ENCODE measurements at regions of chr15 and their contacts with region 1.

Region 1: DNA sequence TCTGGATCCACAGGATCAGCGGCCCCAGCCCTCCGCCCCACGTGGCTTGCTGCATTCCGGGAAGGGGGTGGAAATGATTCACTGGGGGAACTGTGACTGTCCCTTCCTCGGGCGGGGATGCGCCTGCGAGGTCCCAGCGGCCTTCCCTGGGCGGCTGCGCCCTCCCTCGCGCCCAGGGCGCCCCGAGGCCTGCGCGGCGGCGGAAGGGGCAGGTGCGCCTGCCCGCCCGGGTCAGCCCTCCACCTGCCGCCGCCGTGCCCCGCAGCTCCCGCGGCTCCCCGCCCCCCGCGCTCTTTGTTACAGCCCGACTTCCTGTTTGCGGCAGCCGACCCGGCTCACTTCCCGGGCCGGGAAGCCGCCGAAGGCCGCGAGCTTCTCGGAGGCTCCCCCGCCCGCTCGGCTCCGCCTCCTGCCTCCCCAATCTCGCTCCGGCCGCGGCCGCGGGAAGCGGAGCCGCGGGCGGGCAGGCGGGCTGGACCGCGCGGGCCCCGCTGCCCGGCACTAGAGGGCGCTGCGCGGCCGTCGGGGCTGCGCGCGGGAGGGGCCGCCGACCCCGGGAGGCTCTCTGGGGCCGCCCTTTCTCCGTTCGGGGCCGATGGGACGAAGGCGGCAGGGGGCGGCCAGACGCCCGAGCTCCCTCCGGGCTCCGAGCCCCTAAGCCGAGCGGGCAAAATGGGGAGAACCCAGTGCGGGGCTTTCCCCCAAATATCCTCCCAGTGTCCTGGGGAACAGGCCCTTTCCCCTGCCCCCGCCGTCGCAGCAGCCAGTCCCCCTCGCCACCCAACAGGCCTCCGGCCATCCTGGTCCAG is 11.5 kb upstream of the CHAC1 start:
- DNase-seq: peak; percentile 85
- ATAC-seq: peak; percentile 73
- H3K4me3 Mint-ChIP-seq: peak overlapping the region; percentile 74
- H3K27ac Mint-ChIP-seq: peak overlapping the region; percentile 37
- H3K4me1 Mint-ChIP-seq: peaks cover 26% of the 10 kb centered on the region
- H3K27me3 Mint-ChIP-seq: no peaks in the 10 kb centered on the region

Region 2: DNA sequence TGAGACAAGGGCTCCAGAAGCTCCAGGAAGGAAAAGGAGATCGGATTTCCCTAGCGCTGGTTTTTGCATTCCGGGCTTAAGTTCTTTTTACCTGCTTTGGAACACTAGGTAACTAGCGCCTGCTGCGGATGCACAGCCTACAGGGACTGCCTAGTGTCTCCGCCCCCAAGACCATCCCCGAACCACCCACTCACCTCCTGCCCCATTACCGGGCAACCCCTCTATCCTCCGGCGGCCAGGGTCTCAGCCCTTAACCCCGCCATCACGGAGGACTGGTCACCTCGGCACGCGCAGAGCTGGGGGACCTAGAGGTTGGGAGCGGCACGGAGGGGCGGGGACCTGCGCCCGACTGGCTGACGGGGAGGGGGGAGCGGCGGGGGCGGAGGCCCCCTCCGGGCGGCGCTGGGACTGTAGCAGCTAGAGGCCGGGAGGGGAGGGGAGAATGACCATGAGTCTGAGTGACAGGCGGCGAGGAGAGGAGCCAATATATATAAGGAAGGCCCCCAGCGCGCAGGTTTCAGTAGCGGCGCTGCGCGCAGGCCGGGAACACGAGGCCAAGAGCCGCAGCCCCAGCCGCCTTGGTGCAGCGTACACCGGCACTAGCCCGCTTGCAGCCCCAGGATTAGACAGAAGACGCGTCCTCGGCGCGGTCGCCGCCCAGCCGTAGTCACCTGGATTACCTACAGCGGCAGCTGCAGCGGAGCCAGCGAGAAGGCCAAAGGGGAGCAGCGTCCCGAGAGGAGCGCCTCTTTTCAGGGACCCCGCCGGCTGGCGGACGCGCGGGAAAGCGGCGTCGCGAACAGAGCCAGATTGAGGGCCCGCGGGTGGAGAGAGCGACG is 12.7 kb before region 1 on chr15 and contains the start of gene DLL4:
- POLR2A ChIA-PET with region 1: interaction called, 14 read pairs
- DNase-seq: peak; percentile 63
- ATAC-seq: peak; percentile 37
- H3K4me3 Mint-ChIP-seq: peak within 1 kb of the TSS; percentile 72
- H3K27ac Mint-ChIP-seq: no peak within 1 kb of the TSS
- H3K4me1 Mint-ChIP-seq: peaks cover 31% of the 10 kb centered on the region
- H3K27me3 Mint-ChIP-seq: peaks cover 79% of the 10 kb centered on the region
- total RNA-seq, gene DLL4: 0.11 TPM in 1 of 2 experiments, not detected in the other

Measured in activated naive CD8-positive, alpha-beta T cell treated with anti-CD3 and anti-CD28 coated beads, Interleukin-2, amount 10 ng/mL, durations not matched to agents 7 days and 5 days (primary cell).